Aorta (tissue), 5 donors: ENCODE measurements at regions of chr2 and their contacts with region 1.

Region 1: GRCh38 chr2:71798266-71799012 is 345.1 kb downstream of the DYSF start:
- DNase-seq: peak in 1 of 2 donors; percentile 73
- ATAC-seq: no peak
- H3K4me3 ChIP-seq: no peak overlapping the region
- H3K27ac ChIP-seq: no peak overlapping the region
- H3K4me1 ChIP-seq: no peaks in the 10 kb centered on the region
- H3K27me3 ChIP-seq: no peaks in the 10 kb centered on the region

Region 2: GRCh38 chr2:71609958-71610357 is 188.5 kb before region 1 on chr2:
- intact Hi-C with region 1: loop called (anchors 1 to 5 kb)
- DNase-seq: no peak
- ATAC-seq: no peak
- H3K4me3 ChIP-seq: no peak overlapping the region
- H3K27ac ChIP-seq: no peak overlapping the region
- H3K4me1 ChIP-seq: no peaks in the 10 kb centered on the region
- H3K27me3 ChIP-seq: no peaks in the 10 kb centered on the region

Region 3: GRCh38 chr2:71716781-71717624 is 81.4 kb before region 1 on chr2:
- intact Hi-C with region 1: loop called in 1 of 2 experiments (anchors 5 kb)
- DNase-seq: peak; percentile 94 to 98
- ATAC-seq: peak; percentile 89
- H3K4me3 ChIP-seq: no peak overlapping the region
- H3K27ac ChIP-seq: peak overlapping the region; percentile 88 to 90
- H3K4me1 ChIP-seq: peaks cover 10 to 13% of the 10 kb centered on the region in 2 donors
- H3K27me3 ChIP-seq: no peaks in the 10 kb centered on the region

Region 4: DNA sequence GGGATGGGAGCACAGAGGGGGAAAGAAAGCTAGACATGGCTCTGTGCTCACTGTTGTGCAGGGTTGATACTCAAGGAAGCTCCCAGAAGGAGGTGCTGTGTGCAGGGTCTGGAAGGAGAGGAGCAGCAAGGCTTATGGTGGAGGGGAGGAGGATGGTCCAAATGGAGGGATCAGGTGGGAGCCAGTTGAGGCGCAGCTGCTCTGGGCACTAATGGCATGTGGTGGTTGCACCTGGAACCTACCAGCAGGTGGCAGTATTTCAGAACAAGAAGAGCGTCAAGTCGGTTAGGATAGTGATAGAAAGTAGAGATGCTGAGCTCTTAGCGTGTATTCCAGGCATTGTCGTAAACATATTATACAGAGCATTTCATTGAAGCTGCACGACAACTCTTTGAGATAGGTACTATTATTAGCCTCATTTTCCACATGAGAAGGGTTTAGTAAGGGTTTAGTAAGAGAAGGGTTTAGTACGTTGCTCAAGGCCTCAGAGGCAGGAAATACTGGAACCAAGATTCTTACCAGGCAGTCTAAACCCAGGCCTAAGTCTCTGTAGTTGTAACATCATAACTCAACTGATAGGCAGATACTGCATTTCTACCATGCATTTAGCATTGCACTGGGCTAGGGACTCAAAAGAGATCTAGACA is 125.6 kb after region 1 on chr2:
- intact Hi-C with region 1: loop called in 1 of 2 experiments (anchors 5 kb)
- DNase-seq: peak in 1 of 2 donors; percentile 71
- ATAC-seq: peak; percentile 82
- H3K4me3 ChIP-seq: no peak overlapping the region
- H3K27ac ChIP-seq: no peak overlapping the region
- H3K4me1 ChIP-seq: no peaks in the 10 kb centered on the region
- H3K27me3 ChIP-seq: no peaks in the 10 kb centered on the region

Region 5: GRCh38 chr2:71995067-71995665 is 196.7 kb after region 1 on chr2:
- intact Hi-C with region 1: loop called (anchors 2 to 5 kb)
- DNase-seq: no peak
- ATAC-seq: no peak
- H3K4me3 ChIP-seq: no peak overlapping the region
- H3K27ac ChIP-seq: no peak overlapping the region
- H3K4me1 ChIP-seq: no peaks in the 10 kb centered on the region
- H3K27me3 ChIP-seq: peaks cover 0 to 1% of the 10 kb centered on the region in 2 donors

Region 6: GRCh38 chr2:72024451-72025175 is 226.2 kb after region 1 on chr2:
- intact Hi-C with region 1: no loop called
- DNase-seq: peak; percentile 30 to 61
- ATAC-seq: peak; percentile 15
- H3K4me3 ChIP-seq: no peak overlapping the region
- H3K27ac ChIP-seq: no peak overlapping the region
- H3K4me1 ChIP-seq: no peaks in the 10 kb centered on the region
- H3K27me3 ChIP-seq: no peaks in the 10 kb centered on the region